ENCODE measurements at regions of chr11 and their contacts with region 1.

Region 1: GRCh38 chr11:71251761-71252443 is 475 bp downstream of the SHANK2 start:
- DNase-seq: peak in 1 of 2 experiments; percentile 86
- H3K4me3 ChIP-seq: peak overlapping the region; percentile 80 to 95 (median 84)
- H3K27ac ChIP-seq: peak overlapping the region; percentile 75
- H3K4me1 ChIP-seq: peaks cover 22 to 58% (median 47%) of the 10 kb centered on the region in 4 experiments
- H3K27me3 ChIP-seq: no peaks in the 10 kb centered on the region; a peak in 1 of 7 replicates
- CTCF ChIP-seq: peak; percentile 63 to 87 (median 66)
- EP300 ChIP-seq: no peak
- POLR2A ChIP-seq: no peak; a peak in 2 of 3 replicates
- RAD21 ChIP-seq: peak; percentile 51 to 82; a peak in 3 of 4 replicates

Region 2: DNA sequence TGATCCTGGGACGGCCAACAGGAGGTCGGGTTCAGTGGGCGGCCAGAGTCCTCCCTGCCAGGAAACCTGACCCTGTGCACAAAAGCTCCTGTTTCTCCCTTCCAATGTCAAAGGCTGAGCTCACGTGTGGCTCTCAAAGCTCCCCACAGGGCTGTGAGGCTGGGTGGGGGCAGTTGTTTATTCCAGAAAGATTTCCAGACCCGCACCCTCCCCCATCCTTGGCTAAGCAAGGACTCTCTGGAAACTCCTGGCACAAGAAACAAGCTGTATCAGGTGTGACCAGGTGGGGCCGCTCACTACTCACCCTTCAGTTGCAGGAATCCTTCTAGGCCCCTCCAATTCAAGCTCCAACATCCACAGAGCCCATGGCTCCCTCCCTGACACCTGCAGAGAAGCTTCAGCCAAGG is 131.4 kb before region 1 on chr11:
- CTCF ChIA-PET with region 1: interaction called, 12 read pairs
- POLR2A ChIA-PET with region 1: interaction called, 10 read pairs
- DNase-seq: peak; percentile 73 to 78
- H3K4me3 ChIP-seq: no peak overlapping the region
- H3K27ac ChIP-seq: no peak overlapping the region
- H3K4me1 ChIP-seq: peaks cover 0 to 6% (median 3%) of the 10 kb centered on the region in 4 experiments; a peak in 6 of 7 replicates
- H3K27me3 ChIP-seq: no peaks in the 10 kb centered on the region
- CTCF ChIP-seq: peak; percentile 79 to 92 (median 86)
- EP300 ChIP-seq: no peak
- POLR2A ChIP-seq: no peak
- RAD21 ChIP-seq: peak; percentile 96 to 97

Region 3: GRCh38 chr11:71223671-71224660 is 27.9 kb before region 1 on chr11:
- CTCF ChIA-PET with region 1: interaction called, 3 read pairs
- POLR2A ChIA-PET with region 1: interaction called, 15 read pairs
- DNase-seq: no peak
- H3K4me3 ChIP-seq: no peak overlapping the region
- H3K27ac ChIP-seq: no peak overlapping the region
- H3K4me1 ChIP-seq: peaks cover 0 to under 1% (median 0%) of the 10 kb centered on the region in 4 experiments; a peak in 3 of 7 replicates
- H3K27me3 ChIP-seq: no peaks in the 10 kb centered on the region
- CTCF ChIP-seq: peak; percentile 10 to 56 (median 36); a peak in 2 of 4 replicates
- EP300 ChIP-seq: no peak
- POLR2A ChIP-seq: no peak
- RAD21 ChIP-seq: peak; percentile 32 to 43

Region 4: DNA sequence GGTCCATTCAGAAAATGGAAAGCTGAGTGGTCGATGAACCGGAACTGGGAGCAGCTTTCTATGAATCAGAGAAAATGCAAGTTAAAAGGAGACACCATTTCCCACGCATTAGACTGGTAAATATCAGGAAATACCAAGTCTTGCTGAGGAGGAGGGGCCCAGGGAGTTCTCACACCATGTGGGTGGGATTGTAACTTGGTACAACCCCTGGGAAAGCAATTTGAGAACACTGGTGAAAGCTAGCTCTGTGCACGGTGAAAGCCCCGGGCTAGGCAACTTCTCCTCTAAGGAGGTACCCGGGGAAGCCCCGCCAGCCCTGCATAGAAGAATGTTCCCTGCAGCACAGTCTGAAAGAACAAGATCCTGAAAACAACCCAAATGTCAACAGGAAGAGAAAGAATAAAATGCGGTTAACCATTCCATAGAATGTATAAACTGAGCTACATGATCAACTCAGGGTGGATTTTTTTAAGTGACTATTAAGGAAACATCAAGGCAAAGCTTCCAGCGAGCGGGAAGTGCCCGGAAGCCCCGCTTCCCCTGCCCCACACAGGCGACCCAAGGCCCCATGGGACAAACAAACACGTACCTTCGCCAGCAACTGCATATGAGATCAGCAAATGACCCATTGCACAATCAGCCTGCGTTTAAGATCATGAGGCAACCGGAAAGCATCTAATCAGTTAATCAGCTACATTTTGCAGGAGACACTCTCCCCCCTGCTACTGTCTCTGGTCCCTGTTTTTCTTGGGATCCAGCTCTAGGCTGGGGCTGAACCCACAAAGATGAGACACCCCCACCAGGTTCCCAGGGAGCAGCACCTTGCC is 10.8 kb before region 1 on chr11:
- CTCF ChIA-PET with region 1: interaction called, 20 read pairs
- POLR2A ChIA-PET with region 1: interaction called, 34 read pairs
- DNase-seq: no peak
- H3K4me3 ChIP-seq: no peak overlapping the region
- H3K27ac ChIP-seq: no peak overlapping the region
- H3K4me1 ChIP-seq: peaks cover 11 to 25% (median 20%) of the 10 kb centered on the region in 4 experiments
- H3K27me3 ChIP-seq: no peaks in the 10 kb centered on the region
- CTCF ChIP-seq: no peak
- EP300 ChIP-seq: peak in 1 of 2 experiments; percentile 82; a peak in 1 of 3 replicates
- POLR2A ChIP-seq: no peak
- RAD21 ChIP-seq: no peak

Region 5: DNA sequence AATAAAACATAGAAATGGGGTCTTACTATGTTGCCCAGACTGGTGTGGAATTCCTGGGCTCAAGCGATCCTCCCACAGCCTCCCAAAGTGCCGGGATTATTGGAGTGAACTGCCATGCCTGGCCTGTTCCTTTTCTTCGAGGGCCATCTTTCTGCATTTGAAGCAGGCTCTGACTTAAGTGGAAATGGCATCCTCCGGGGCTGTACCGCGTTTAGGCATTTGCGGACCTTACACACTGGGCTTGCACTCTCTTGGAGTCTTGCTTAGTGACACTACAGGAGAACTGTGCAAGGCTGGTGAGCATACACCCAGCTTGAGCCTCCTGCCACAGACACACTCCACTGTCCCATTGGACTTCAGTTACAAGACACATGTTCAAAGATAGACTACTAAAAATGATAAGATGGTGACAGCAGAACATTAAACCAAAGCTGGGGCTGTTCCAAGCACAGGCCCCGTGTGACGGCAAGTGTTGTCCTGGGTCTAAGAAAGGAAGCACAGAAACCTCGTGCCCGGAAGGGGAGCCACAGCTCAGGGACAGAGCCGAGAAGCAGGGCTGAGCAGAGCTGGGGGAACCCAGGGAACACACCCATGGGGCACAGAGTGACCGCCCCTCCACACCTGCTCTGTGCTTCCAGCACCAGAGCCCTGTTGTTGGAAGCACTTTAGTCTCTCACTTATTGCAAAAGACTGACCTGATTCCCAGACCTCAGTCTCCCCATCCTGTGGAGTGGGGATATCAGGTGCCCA is 59.4 kb after region 1 on chr11:
- CTCF ChIA-PET with region 1: no interaction called
- POLR2A ChIA-PET with region 1: no interaction called
- DNase-seq: peak in 1 of 2 experiments; percentile 30
- H3K4me3 ChIP-seq: no peak overlapping the region
- H3K27ac ChIP-seq: no peak overlapping the region
- H3K4me1 ChIP-seq: no peaks in the 10 kb centered on the region
- H3K27me3 ChIP-seq: no peaks in the 10 kb centered on the region; a peak in 1 of 7 replicates
- CTCF ChIP-seq: no peak
- EP300 ChIP-seq: no peak
- POLR2A ChIP-seq: no peak
- RAD21 ChIP-seq: no peak

Region 6: DNA sequence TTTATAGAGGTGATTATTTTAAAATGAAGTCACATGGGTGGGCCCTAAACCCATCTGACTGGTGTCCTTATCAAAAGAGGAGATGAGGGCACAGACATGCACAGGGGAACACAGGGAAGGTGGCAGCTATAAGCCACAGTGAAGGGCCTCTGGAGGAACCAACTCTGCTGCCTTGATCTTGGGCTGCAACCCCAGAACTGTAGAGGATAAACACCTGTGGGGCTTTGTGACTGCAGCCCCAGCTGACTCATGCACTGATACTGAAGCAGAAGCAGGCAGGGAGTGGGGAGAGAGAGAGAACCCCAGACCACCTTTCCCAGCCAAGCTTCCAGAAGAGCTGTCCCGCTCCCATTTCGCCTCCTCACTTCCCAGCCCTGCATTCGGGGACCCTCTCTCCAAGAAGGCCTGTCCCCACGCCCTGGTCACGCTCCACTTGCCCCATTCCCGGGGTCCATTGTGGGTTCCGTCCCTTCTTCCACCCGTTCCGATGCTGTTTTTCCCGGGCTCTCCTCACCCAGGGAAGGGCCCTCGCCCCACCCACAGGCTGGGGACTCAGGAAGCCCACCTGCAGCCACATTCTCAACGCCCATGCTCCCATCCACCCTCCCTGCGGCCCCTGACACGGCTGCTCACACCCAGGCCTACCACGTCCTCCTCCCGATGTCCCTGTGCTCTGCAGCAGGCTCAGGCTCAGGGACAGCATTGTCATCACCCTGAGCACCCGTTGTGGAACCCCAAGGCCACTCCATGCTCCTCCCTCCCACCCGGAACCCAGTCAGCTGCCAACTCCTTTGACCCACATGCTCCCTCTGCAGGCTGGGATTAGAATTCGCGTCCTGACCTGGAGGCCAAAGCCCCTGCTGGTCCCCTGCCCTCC is 91.3 kb after region 1 on chr11:
- CTCF ChIA-PET with region 1: interaction called, 15 read pairs
- POLR2A ChIA-PET with region 1: interaction called, 4 read pairs
- DNase-seq: peak; percentile 50 to 86
- H3K4me3 ChIP-seq: no peak overlapping the region
- H3K27ac ChIP-seq: no peak overlapping the region
- H3K4me1 ChIP-seq: peaks cover 0 to 5% (median 0%) of the 10 kb centered on the region in 4 experiments; a peak in 2 of 7 replicates
- H3K27me3 ChIP-seq: no peaks in the 10 kb centered on the region
- CTCF ChIP-seq: peak; percentile 91 to 95 (median 94)
- EP300 ChIP-seq: no peak
- POLR2A ChIP-seq: no peak
- RAD21 ChIP-seq: peak; percentile 79 to 87